ENCODE measurements at regions of chr13 and their contacts with region 1.

Region 1: GRCh38 chr13:22993148-22993547 is 187.6 kb upstream of the SGCG start:
- DNase-seq: no peak
- H3K4me3 ChIP-seq: no peak overlapping the region
- H3K4me3 Mint-ChIP-seq: no peak overlapping the region
- H3K27ac Mint-ChIP-seq: peak overlapping the region; percentile 66
- H3K4me1 ChIP-seq: peaks cover 7% of the 10 kb centered on the region; the same call in 1 of the 2 replicates
- H3K4me1 Mint-ChIP-seq: no peaks in the 10 kb centered on the region
- H3K27me3 ChIP-seq: no peaks in the 10 kb centered on the region
- H3K27me3 Mint-ChIP-seq: no peaks in the 10 kb centered on the region
- CTCF ChIP-seq: no peak

Region 2: DNA sequence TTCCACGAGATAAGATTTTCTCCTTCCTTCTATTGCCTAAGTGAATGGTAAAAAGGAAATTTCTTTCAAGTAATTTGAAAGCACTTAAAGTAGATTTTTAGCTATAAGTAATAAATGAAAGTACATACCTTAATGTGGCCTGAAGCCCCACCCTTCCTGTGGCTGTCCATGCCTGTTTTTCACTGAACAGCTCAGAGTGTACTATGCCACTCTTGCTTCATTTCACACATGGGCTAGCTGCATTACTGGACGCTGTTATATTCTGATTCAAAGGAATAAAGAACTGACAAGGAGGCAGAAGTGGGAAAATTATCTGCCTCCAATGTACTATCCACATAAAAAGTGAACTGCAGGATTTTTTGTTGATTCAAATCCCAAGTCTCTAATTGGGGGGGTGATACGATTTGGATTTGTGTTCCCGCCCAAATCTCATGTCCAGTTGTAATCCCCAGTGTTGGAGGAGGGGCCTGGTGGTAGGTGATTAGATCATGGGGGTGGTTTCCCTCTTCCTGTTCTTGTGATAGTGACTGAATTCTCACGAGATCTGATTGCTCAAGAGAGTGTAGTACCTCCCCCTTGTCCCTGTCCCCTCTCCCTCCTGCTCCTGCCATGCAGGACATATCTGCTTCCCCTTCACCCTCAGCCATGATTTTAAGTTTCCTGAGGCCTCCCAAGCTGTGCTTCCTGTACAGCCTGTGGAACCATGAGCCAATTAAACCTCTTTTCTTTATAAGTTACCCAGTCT is 32.9 kb after region 1 on chr13:
- CTCF ChIA-PET with region 1: no interaction called
- POLR2A ChIA-PET with region 1: no interaction called
- intact Hi-C with region 1: no loop called
- DNase-seq: no peak
- H3K4me3 ChIP-seq: no peak overlapping the region
- H3K4me3 Mint-ChIP-seq: no peak overlapping the region
- H3K27ac Mint-ChIP-seq: peak overlapping the region; percentile 70
- H3K4me1 ChIP-seq: no peaks in the 10 kb centered on the region
- H3K4me1 Mint-ChIP-seq: peaks cover 7% of the 10 kb centered on the region
- H3K27me3 ChIP-seq: no peaks in the 10 kb centered on the region
- H3K27me3 Mint-ChIP-seq: no peaks in the 10 kb centered on the region
- CTCF ChIP-seq: no peak

Region 3: DNA sequence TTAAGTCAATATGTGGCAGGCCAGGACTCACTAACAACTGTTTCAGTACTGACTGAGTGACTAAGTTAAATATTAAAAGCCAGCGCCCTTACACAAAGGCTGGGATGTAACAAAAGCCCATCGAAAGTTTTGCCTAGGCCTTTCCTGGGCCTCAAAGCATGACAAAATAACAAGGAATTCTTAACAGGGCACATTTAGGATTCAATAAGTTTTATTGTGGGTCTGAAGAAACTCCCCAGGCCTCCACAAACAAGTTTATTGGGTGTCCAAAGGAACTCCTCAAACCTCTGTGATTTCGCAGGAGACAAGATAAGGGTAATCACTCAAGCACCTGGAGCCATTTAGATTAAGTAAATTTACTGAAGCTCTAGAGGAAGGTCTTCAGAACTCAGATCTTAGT is 57.0 kb after region 1 on chr13:
- CTCF ChIA-PET with region 1: no interaction called
- POLR2A ChIA-PET with region 1: no interaction called
- intact Hi-C with region 1: loop called (anchors 2 kb)
- DNase-seq: peak; percentile 77 to 81
- H3K4me3 ChIP-seq: no peak overlapping the region
- H3K4me3 Mint-ChIP-seq: peak overlapping the region; percentile 59
- H3K27ac Mint-ChIP-seq: peak overlapping the region; percentile 59
- H3K4me1 ChIP-seq: peaks cover 24% of the 10 kb centered on the region
- H3K4me1 Mint-ChIP-seq: peaks cover 28% of the 10 kb centered on the region
- H3K27me3 ChIP-seq: no peaks in the 10 kb centered on the region
- H3K27me3 Mint-ChIP-seq: no peaks in the 10 kb centered on the region
- CTCF ChIP-seq: no peak